Heart right ventricle (tissue), 16 donors: ENCODE measurements at regions of chr15 and their contacts with region 1.

Region 1: GRCh38 chr15:74709011-74709410 is 13.2 kb upstream of the EDC3 start:
- DNase-seq: no peak
- ATAC-seq: no peak
- H3K4me3 ChIP-seq: no peak overlapping the region
- H3K27ac ChIP-seq: no peak overlapping the region
- H3K4me1 ChIP-seq: peaks cover 0 to 13% (median 0%) of the 10 kb centered on the region in 9 donors
- H3K27me3 ChIP-seq: peaks cover 0 to 14% (median 0%) of the 10 kb centered on the region in 7 donors
- CTCF ChIP-seq: no peak

Region 2: GRCh38 chr15:73897441-73898261 is 811.4 kb before region 1 on chr15:
- intact Hi-C with region 1: no loop called
- DNase-seq: peak; percentile 44 to 66
- ATAC-seq: peak; percentile 74 to 95 (median 88)
- H3K4me3 ChIP-seq: no peak overlapping the region
- H3K27ac ChIP-seq: no peak overlapping the region
- H3K4me1 ChIP-seq: peaks cover 0 to 4% (median 0%) of the 10 kb centered on the region in 9 donors
- H3K27me3 ChIP-seq: peaks cover 0 to 4% (median 0%) of the 10 kb centered on the region in 7 donors
- CTCF ChIP-seq: peak; percentile 72 to 92 (median 83)

Region 3: DNA sequence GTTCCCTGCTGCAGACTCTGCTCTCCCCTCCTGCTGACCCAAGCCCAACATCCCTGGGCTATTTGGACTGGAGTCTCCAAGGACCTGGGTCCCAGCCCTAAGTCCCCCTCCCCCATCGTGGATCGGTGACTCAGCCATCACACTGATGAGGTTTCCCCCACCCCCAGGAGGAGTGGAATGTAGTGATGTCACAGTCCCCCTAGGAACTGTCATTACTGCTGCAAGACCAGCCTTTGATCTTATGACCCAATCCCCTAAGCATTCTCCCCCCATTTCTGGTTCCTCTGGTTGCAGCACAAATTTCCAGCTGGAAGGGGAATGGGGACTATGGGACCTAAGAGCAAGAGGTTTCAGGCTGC is 1067.0 kb after region 1 on chr15:
- intact Hi-C with region 1: loop called in 1 of 10 experiments (anchors 10 kb)
- DNase-seq: no peak
- ATAC-seq: no peak
- H3K4me3 ChIP-seq: no peak overlapping the region
- H3K27ac ChIP-seq: no peak overlapping the region
- H3K4me1 ChIP-seq: peaks cover 0 to 12% (median 0%) of the 10 kb centered on the region in 9 donors
- H3K27me3 ChIP-seq: peaks cover 0 to 5% (median 0%) of the 10 kb centered on the region in 7 donors
- CTCF ChIP-seq: no peak